Dendritic cell treated with granulocyte-macrophage colony-stimulating factor and Interleukin-4, amounts not matched to agents 40 ng/mL and 50 ng/mL, for 4 days (primary cell): ENCODE measurements at regions of chr6 and their contacts with region 1.

Region 1: GRCh38 chr6:120290964-120291363 is 941.4 kb upstream of the MAN1A1 start:
- H3K4me3 Mint-ChIP-seq: no peak overlapping the region
- H3K27ac Mint-ChIP-seq: no peak overlapping the region
- H3K4me1 Mint-ChIP-seq: no peaks in the 10 kb centered on the region
- H3K27me3 Mint-ChIP-seq: no peaks in the 10 kb centered on the region

Region 2: DNA sequence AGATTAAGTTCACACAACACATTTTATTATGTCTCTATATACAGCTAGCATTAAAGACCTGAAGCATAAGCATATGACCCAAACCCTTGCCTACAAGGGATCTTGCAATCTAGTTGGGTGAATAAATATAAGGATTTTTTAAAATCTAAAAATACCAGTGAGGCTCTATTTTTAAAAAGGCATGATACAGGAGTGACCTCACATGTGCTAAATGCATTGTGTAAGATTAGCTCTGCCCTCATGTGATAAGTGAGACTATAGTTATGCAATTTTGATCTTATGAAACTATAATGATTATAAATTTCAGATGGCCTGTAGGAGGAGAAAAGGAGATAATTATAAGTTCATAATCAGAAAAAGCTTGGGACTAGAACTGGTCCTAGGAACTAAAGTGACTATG is 490.4 kb before region 1 on chr6:
- intact Hi-C with region 1: loop called (anchors 10 kb)
- H3K4me3 Mint-ChIP-seq: no peak overlapping the region
- H3K27ac Mint-ChIP-seq: no peak overlapping the region
- H3K4me1 Mint-ChIP-seq: no peaks in the 10 kb centered on the region
- H3K27me3 Mint-ChIP-seq: no peaks in the 10 kb centered on the region